MCF 10A (cell line): ENCODE measurements at regions of chr5 and their contacts with region 1.

Region 1: DNA sequence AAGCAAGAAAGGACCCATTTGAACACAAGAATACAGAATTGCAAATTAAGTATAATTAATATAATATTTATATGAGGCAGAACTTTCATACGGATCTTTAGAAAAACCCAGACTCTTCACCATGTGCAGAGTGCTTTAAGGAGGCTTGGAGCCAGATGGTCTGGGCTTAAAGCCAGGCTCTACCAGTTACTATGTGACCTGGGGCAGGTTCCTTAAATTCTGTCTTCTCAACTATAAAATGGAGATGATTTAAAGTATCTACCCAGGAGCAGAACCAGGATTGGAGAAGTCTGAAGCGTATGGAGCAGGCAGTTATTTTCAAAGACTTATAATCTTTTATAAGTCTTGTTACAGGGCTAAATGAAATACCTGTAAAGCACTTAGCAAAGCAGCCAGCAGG is 202.1 kb downstream of the TSSK1B start:
- DNase-seq: peak; percentile 60
- H3K4me3 Mint-ChIP-seq: no peak overlapping the region
- H3K27ac Mint-ChIP-seq: no peak overlapping the region
- H3K4me1 Mint-ChIP-seq: peaks cover 43% of the 10 kb centered on the region
- H3K27me3 Mint-ChIP-seq: no peaks in the 10 kb centered on the region
- CTCF ChIP-seq: no peak

Region 2: GRCh38 chr5:113221294-113222176 is 11.1 kb before region 1 on chr5:
- CTCF ChIA-PET with region 1: interaction called, 3 read pairs
- POLR2A ChIA-PET with region 1: interaction called, 13 read pairs
- intact Hi-C with region 1: no loop called
- DNase-seq: no peak
- H3K4me3 Mint-ChIP-seq: no peak overlapping the region
- H3K27ac Mint-ChIP-seq: no peak overlapping the region
- H3K4me1 Mint-ChIP-seq: no peaks in the 10 kb centered on the region
- H3K27me3 Mint-ChIP-seq: no peaks in the 10 kb centered on the region
- CTCF ChIP-seq: no peak